Activated CD8-positive, alpha-beta T cell treated with anti-CD3 and anti-CD28 coated beads for 36 hours (primary cell): ENCODE measurements at regions of chr10 and their contacts with region 1.

Region 1: GRCh38 chr10:68901104-68901927 is at the start of gene DDX50:
- DNase-seq: peak; percentile 99
- ATAC-seq: peak; percentile 97
- H3K4me3 Mint-ChIP-seq: peak within 1 kb of the TSS; percentile 99
- H3K27ac Mint-ChIP-seq: peak within 1 kb of the TSS; percentile 99
- H3K4me1 Mint-ChIP-seq: peaks cover 41% of the 10 kb centered on the region
- H3K27me3 Mint-ChIP-seq: no peaks in the 10 kb centered on the region
- CTCF ChIP-seq: no peak
- total RNA-seq, gene DDX50: 102 to 105 TPM

Region 2: GRCh38 chr10:68792115-68792514 is 109.2 kb before region 1 on chr10:
- CTCF ChIA-PET with region 1: no interaction called
- POLR2A ChIA-PET with region 1: no interaction called
- intact Hi-C with region 1: loop called (anchors 10 kb)
- DNase-seq: no peak
- ATAC-seq: no peak
- H3K4me3 Mint-ChIP-seq: no peak overlapping the region
- H3K27ac Mint-ChIP-seq: no peak overlapping the region
- H3K4me1 Mint-ChIP-seq: no peaks in the 10 kb centered on the region
- H3K27me3 Mint-ChIP-seq: no peaks in the 10 kb centered on the region
- CTCF ChIP-seq: peak; percentile 17

Region 3: GRCh38 chr10:68826764-68827591 is 74.3 kb before region 1 on chr10 and contains the start of gene STOX1:
- CTCF ChIA-PET with region 1: interaction called, 15 read pairs
- POLR2A ChIA-PET with region 1: interaction called, 10 read pairs
- intact Hi-C with region 1: no loop called
- DNase-seq: peak; percentile 64
- ATAC-seq: peak; percentile 87
- H3K4me3 Mint-ChIP-seq: peak within 1 kb of the TSS; percentile 72
- H3K27ac Mint-ChIP-seq: no peak within 1 kb of the TSS
- H3K4me1 Mint-ChIP-seq: peaks cover 9% of the 10 kb centered on the region
- H3K27me3 Mint-ChIP-seq: peaks cover 5% of the 10 kb centered on the region
- CTCF ChIP-seq: no peak
- total RNA-seq, gene STOX1: 0.22 to 0.36 TPM

Region 4: DNA sequence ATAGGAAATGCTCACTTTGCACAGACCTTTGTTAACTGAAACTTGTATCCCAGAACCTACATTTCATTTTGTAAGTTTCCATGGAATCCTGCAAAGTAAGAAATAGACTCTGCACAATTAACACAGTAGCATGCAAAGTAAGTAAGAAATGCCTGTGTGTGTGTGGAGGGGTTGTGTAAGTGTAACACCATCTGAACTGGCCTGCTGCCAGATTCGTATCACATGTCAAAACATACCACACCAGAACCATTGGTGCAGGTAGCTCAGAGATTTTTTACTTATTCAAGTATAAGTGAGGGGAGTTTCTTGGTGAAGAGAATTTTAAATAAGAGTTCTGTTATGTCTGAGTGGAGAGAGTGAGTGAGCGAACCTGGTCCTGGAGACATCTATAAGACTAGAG is 36.8 kb after region 1 on chr10:
- CTCF ChIA-PET with region 1: no interaction called
- POLR2A ChIA-PET with region 1: no interaction called
- intact Hi-C with region 1: no loop called
- DNase-seq: no peak
- ATAC-seq: no peak
- H3K4me3 Mint-ChIP-seq: no peak overlapping the region
- H3K27ac Mint-ChIP-seq: peak overlapping the region; percentile 58
- H3K4me1 Mint-ChIP-seq: peaks cover 9% of the 10 kb centered on the region
- H3K27me3 Mint-ChIP-seq: no peaks in the 10 kb centered on the region
- CTCF ChIP-seq: no peak